ENCODE measurements at regions of chr7 and their contacts with region 1.

Region 1: DNA sequence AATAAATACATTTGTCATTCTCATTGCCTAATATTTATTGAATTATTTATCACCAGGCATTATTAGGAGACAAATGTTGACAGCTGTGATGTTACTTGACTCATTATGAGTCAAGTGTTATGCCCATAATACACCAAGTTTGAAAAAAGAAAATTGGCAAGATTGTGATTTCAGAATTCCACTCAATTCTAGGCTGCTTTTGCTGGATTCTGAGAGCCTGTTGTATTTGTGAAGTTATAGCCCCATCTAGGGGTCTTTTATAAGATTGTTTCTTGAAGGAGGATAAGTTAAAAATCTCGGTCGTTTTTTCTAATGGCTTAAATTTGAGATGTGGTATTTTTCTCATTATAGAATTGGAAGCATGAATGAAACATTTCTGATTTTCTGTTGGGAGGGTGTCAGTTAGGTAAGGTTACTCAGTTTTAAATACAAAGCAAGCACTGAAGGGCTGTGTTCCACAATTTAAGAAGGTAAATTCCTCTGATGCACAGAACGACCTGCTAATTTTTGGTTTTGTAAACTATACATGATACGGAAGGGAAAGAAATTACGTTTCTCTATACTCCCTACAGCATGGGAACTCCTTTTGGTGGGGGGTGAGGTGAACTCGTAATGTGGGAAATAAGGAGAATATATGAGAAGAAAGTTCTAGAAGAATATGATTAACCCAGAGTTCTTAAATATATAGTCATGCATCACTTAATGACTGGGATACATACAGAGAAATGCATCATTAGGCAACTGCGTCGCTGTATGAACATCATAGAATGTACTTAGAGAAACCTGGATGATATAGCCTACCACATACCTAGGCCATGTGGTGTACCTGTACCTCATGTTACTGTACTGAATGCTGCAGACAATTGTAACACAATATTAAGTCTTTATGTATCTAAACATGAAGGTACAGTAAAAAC is 2.6 kb downstream of the STK31 start:
- H3K4me3 Mint-ChIP-seq: no peak overlapping the region
- H3K27ac Mint-ChIP-seq: no peak overlapping the region
- H3K4me1 Mint-ChIP-seq: no peaks in the 10 kb centered on the region
- H3K27me3 Mint-ChIP-seq: no peaks in the 10 kb centered on the region

Region 2: DNA sequence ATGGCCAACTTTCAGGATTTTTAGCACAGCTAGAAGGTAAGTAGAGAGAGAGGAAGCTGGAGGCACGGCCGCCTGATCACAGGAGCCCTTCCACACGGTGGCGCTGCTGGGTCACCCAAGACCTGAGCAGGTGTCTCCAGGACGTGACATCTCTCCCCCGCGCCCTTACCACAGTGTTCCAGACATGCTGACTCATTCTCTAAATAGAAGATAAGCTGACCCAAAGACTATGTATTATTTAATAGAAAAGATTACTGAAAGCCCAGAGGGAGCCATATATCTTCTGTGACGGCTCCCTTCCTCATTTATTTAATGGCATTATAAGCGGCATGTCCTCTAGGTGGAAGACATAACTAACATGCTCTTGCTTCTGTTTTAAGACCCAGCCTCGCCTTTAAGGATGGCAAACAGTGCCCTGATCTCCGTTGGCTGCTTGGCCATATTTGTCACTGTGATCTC is 439.5 kb before region 1 on chr7:
- intact Hi-C with region 1: loop called (anchors 5 kb)
- H3K4me3 Mint-ChIP-seq: no peak overlapping the region
- H3K27ac Mint-ChIP-seq: no peak overlapping the region
- H3K4me1 Mint-ChIP-seq: peaks cover 6% of the 10 kb centered on the region
- H3K27me3 Mint-ChIP-seq: peaks cover 3% of the 10 kb centered on the region

Region 3: GRCh38 chr7:23546897-23547572 is 165.6 kb before region 1 on chr7:
- intact Hi-C with region 1: loop called (anchors 1 kb)
- H3K4me3 Mint-ChIP-seq: no peak overlapping the region
- H3K27ac Mint-ChIP-seq: no peak overlapping the region
- H3K4me1 Mint-ChIP-seq: peaks cover 14% of the 10 kb centered on the region
- H3K27me3 Mint-ChIP-seq: peaks cover 3% of the 10 kb centered on the region

Region 4: GRCh38 chr7:23570592-23571200 is 141.9 kb before region 1 on chr7:
- intact Hi-C with region 1: loop called (anchors 1 kb)
- H3K4me3 Mint-ChIP-seq: no peak overlapping the region
- H3K27ac Mint-ChIP-seq: no peak overlapping the region
- H3K4me1 Mint-ChIP-seq: no peaks in the 10 kb centered on the region
- H3K27me3 Mint-ChIP-seq: peaks cover 3% of the 10 kb centered on the region

Measured in dendritic cell treated with granulocyte-macrophage colony-stimulating factor and Interleukin-4, amounts not matched to agents 40 ng/mL and 50 ng/mL, for 4 days (primary cell).